Endothelial cell of umbilical vein (primary cell): ENCODE measurements at regions of chr20 and their contacts with region 1.

Region 1: DNA sequence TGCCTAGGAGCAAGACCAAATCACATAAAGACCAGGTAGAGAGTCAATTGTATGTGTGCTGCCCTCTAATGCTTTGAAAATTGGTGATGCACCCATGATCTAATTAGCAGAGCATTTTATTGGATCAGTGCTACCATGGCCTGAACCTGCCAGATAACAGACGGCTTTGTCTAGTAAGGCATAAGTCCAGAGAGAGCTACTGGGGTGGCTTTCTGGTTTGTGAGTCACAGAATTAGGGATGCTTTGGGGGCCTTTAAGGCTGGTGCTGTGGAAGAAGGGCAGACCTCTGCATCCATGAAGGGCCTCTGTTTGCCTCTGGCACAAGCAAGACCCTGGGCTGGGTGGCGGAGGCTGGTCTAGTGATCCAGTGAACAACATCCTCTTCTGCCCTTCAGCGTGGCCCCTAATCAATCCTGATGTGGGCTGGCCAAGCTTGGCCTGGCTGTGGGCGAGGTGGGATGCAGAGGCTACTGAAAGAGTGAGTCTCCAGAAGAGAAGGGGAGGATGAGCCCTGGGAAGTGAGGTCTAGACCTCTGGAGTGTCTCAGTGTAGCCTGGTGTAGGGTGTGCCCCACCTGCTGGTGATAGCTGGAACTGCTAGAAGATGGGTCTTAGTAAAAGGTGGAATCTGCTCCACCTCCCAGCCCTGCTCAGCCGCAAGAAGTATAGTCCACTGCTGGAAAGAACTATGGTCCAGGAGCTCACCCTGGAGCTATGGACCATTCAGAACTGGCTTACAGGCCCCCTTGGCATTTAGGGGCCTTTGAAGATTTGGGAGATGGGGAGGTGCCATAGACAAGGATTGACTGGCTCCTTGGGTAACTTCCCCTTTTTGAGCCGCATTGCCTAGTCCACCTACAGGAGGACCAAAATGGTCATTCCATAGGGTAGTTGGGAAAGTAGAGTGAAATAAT is 36.7 kb upstream of the AAR2 start:
- DNase-seq: peak; percentile 66
- H3K4me3 ChIP-seq: no peak overlapping the region
- H3K27ac ChIP-seq: no peak overlapping the region
- H3K4me1 ChIP-seq: no peaks in the 10 kb centered on the region
- H3K27me3 ChIP-seq: peaks cover 0 to 4% of the 10 kb centered on the region in 2 experiments
- CTCF ChIP-seq: peak; percentile 86 to 91
- POLR2A ChIP-seq: no peak

Region 2: DNA sequence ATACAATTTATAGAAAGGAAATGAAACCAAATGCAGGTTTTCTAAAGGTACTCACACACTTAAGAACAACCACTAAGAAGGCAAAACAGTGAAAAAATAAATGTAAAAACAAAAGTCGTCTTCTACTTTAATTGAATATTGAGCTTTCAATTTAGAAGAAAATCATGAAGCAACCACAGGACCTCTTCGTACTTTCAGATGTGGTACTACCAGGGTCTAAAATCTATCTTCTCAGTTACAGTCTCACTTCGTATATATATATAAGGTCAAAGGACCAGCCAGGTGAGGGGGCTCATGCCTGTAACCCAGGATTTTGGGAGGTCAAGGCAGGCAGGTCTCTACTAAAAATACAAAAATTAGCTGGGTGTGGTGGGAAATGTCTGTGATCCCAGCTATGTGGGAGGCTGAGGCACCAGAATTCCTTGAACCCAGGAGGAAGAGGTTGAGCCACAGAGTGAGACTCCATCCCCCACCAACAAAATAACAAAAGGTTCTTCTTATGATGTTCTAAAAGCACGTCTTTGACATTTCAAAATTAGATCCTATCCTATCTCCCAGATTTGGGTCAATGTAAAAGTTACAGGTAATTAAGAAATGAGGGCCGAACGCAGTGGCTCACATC is 487.9 kb before region 1 on chr20:
- CTCF ChIA-PET with region 1: no interaction called
- POLR2A ChIA-PET with region 1: no interaction called
- dilution Hi-C with region 1: no loop called
- intact Hi-C with region 1: no loop called
- DNase-seq: no peak
- H3K4me3 ChIP-seq: no peak overlapping the region
- H3K27ac ChIP-seq: no peak overlapping the region
- H3K4me1 ChIP-seq: no peaks in the 10 kb centered on the region
- H3K27me3 ChIP-seq: no peaks in the 10 kb centered on the region
- CTCF ChIP-seq: no peak
- POLR2A ChIP-seq: no peak

Region 3: DNA sequence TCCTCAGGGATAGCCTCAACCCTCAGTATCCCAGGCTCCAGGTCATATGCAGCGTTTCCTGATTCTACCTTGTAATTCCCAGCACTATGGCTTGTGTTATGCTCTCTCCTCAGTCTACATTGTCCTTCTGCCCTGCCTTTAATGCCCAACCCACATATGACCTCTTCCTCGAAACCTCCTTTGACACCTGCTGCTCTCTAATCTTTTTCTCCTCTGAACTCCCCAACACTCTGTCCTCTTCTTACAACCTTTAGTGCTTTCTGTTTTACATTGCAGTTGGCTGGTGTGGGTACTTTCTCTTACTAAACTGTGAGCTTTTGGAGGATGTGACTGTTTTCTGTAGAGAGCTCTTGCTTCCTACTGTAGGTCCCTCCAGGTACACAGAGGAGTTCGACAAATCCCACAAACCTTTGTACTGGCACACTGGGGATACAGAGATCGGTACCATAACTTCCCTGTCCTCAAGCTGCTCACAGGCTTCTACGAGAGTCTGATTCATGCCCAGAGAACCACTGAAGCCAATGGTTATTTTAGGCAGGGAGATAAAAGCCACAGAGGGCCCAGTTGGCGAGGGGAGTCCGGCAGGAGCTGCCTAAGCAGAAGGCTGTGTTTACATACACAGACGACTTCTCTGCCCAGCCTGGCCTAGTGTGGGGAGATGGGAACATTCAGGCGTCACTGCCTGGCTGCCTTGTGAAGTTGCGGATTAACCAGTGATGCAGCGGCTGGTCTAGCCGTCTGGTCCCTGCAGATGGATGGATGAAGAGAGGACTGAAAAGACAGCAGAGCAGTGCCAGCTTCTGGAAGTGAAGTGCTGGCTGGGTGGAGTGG is 53.5 kb before region 1 on chr20:
- CTCF ChIA-PET with region 1: interaction called, 12 read pairs
- POLR2A ChIA-PET with region 1: no interaction called
- dilution Hi-C with region 1: no loop called
- intact Hi-C with region 1: no loop called
- DNase-seq: no peak
- H3K4me3 ChIP-seq: no peak overlapping the region
- H3K27ac ChIP-seq: no peak overlapping the region
- H3K4me1 ChIP-seq: peaks cover 9% of the 10 kb centered on the region
- H3K27me3 ChIP-seq: no peaks in the 10 kb centered on the region
- CTCF ChIP-seq: no peak
- POLR2A ChIP-seq: no peak

Region 4: DNA sequence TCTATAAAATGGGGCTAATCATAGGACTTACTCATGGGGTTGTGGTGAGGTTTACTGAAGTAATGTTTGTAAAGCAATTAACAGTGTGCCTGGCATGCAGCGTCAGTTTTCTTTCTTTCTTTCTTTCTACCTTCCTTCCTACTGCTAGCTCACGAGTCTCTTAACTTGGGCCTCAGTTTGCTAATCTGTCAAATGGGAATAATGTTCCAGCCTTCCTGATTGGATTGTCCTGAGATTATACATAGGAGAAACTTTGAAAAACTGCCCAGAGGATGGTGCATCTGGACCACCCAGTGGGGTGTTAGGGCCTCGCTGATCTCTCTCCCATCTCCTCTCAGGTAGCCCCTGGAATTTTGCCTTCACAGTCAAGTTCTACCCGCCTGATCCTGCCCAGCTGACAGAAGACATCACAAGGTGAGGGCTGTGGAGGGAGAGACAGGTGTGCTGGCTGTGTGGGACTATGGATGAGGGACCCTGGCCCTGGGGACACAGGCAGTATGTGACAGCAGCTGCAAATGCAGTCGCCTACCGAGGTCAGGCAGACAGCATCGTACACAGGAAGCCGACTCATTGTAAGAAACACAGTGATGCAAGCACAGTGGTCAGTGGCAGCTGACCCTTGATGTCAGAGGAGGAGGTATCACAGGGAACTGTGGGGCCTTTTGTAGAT is 17.5 kb before region 1 on chr20:
- CTCF ChIA-PET with region 1: interaction called, 27 read pairs
- POLR2A ChIA-PET with region 1: no interaction called
- dilution Hi-C with region 1: no loop called
- intact Hi-C with region 1: no loop called
- DNase-seq: peak; percentile 52
- H3K4me3 ChIP-seq: no peak overlapping the region
- H3K27ac ChIP-seq: peak overlapping the region; percentile 24
- H3K4me1 ChIP-seq: peaks cover 7% of the 10 kb centered on the region
- H3K27me3 ChIP-seq: no peaks in the 10 kb centered on the region
- CTCF ChIP-seq: no peak
- POLR2A ChIP-seq: no peak

Region 5: GRCh38 chr20:36235892-36236785 is 36.5 kb after region 1 on chr20 and contains the start of gene AAR2:
- CTCF ChIA-PET with region 1: interaction called, 15 read pairs
- POLR2A ChIA-PET with region 1: no interaction called
- dilution Hi-C with region 1: no loop called
- intact Hi-C with region 1: no loop called
- DNase-seq: peak; percentile 69
- H3K4me3 ChIP-seq: peak within 1 kb of the TSS; percentile 61 to 91 (median 84)
- H3K27ac ChIP-seq: peak within 1 kb of the TSS; percentile 63
- H3K4me1 ChIP-seq: peaks cover 10% of the 10 kb centered on the region
- H3K27me3 ChIP-seq: no peaks in the 10 kb centered on the region
- CTCF ChIP-seq: no peak
- POLR2A ChIP-seq: peak; percentile 89
- total RNA-seq, gene AAR2: 21.9 and 23.2 TPM in 2 replicates

Region 6: GRCh38 chr20:36399147-36399968 is 199.8 kb after region 1 on chr20:
- CTCF ChIA-PET with region 1: interaction called, 62 read pairs
- POLR2A ChIA-PET with region 1: no interaction called
- dilution Hi-C with region 1: no loop called
- intact Hi-C with region 1: loop called (anchors 2 kb)
- DNase-seq: peak; percentile 73
- H3K4me3 ChIP-seq: no peak overlapping the region
- H3K27ac ChIP-seq: no peak overlapping the region
- H3K4me1 ChIP-seq: no peaks in the 10 kb centered on the region
- H3K27me3 ChIP-seq: peaks cover 17 to 19% of the 10 kb centered on the region in 2 experiments
- CTCF ChIP-seq: peak; percentile 66 to 67
- POLR2A ChIP-seq: no peak

Region 7: DNA sequence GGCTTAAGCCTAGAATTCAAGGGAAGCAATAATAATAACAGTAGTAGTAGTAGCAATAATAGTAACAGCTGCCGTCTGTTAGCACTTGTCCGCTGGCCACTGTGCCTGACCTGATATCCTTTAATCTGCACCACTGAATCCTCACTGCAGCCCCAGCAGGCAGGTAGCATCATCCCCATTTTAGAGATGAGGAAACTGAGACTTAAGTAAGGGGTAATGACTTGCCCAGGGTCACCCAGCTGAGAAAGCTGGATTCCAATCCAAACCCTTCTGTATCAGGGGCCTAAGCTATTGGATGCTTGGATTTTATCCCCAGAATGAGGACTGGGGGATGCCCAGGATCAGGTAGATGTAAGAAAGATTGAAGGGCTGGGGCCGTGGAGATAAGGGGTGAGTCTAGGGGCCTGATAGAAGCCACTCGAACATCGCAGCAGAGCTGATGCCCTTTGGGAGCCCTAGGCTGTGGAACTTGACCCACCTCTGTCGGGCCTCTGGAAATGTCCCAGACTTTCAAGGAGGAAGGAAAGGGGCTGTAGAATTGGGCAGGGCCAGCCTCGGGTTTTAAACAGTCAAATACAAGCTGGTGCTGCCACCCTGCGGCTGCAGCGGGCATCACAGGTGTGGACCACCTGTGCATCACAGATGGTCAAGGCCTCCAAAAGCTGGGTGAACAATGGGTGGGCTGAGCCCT is 239.6 kb after region 1 on chr20:
- CTCF ChIA-PET with region 1: interaction called, 203 read pairs
- POLR2A ChIA-PET with region 1: no interaction called
- dilution Hi-C with region 1: no loop called
- intact Hi-C with region 1: loop called (anchors 1 kb)
- DNase-seq: peak; percentile 44
- H3K4me3 ChIP-seq: no peak overlapping the region
- H3K27ac ChIP-seq: no peak overlapping the region
- H3K4me1 ChIP-seq: no peaks in the 10 kb centered on the region
- H3K27me3 ChIP-seq: no peaks in the 10 kb centered on the region
- CTCF ChIP-seq: peak; percentile 90 to 96
- POLR2A ChIP-seq: no peak